ENCODE measurements at regions of chr9 and their contacts with region 1.

Region 1: GRCh38 chr9:122350638-122351355 is 20.0 kb upstream of the PTGS1 start:
- DNase-seq: peak; percentile 65
- ATAC-seq: peak; percentile 91
- H3K4me3 ChIP-seq: no peak overlapping the region
- H3K27ac ChIP-seq: no peak overlapping the region
- H3K4me1 ChIP-seq: peaks cover 6% of the 10 kb centered on the region
- H3K27me3 ChIP-seq: no peaks in the 10 kb centered on the region
- CTCF ChIP-seq: peak; percentile 99
- POLR2A ChIP-seq: 0 out of 2 replicates have a peak, but pooled peaks have one; percentile 42
- RAD21 ChIP-seq: peak; percentile 99

Region 2: GRCh38 chr9:122099271-122099869 is 251.4 kb before region 1 on chr9:
- CTCF ChIA-PET with region 1: interaction called, 19 read pairs
- POLR2A ChIA-PET with region 1: no interaction called
- dilution Hi-C with region 1: no loop called
- in situ Hi-C with region 1: loop called (anchors 10 kb)
- intact Hi-C with region 1: loop called (anchors 1 kb)
- DNase-seq: peak; percentile 74
- ATAC-seq: peak; percentile 89
- H3K4me3 ChIP-seq: no peak overlapping the region
- H3K27ac ChIP-seq: no peak overlapping the region
- H3K4me1 ChIP-seq: no peaks in the 10 kb centered on the region; the same call in 1 of the 2 replicates
- H3K27me3 ChIP-seq: peaks cover 3% of the 10 kb centered on the region
- CTCF ChIP-seq: peak; percentile 86
- POLR2A ChIP-seq: no peak
- RAD21 ChIP-seq: peak; percentile 82

Region 3: DNA sequence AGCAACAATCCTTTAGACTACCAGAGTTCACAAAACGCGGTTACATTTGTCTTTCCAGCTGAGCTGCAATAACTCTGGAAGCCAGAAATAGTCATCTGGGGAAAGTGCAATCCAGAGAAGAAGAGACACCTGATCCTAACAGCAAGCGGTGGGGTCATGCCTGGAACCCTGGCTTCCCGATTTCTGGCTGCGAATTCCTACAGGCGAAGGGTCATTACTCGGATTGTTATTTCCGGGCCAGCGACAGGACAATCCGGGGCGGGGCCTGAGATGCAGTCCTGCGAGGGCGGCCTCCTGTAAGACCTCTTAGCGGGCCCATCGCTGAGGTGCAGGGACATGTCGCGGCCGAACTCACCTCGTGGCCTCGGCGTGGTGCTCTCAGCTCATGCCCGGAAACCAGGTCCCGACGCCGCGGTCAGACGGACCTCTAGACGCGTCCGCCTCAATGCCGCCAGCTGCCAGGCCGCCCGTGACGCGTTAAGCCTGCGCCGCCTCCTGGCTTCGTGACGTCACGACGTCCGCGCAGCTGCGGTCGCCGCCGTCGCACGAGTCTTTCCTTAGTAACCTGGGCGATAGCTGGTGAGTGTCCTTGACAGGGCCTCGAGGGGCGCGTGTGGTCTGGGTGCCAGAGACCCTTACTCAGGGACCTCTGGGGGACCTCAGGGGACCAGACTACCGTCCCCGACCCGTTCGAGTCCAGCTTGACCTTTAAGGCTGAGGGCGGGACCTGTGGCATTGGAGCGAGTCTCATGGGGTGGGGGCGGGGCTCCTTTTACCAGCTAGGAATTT is 86.2 kb before region 1 on chr9 and contains the starts of genes MRRF and RBM18:
- CTCF ChIA-PET with region 1: interaction called, 6 read pairs
- POLR2A ChIA-PET with region 1: interaction called, 5 read pairs
- dilution Hi-C with region 1: no loop called
- in situ Hi-C with region 1: no loop called
- intact Hi-C with region 1: loop called (anchors 1 kb)
- DNase-seq: peak; percentile 91
- ATAC-seq: peak; percentile 92
- H3K4me3 ChIP-seq: peak within 1 kb of the TSS; percentile 72
- H3K27ac ChIP-seq: peak within 1 kb of the TSS; percentile 99
- H3K4me1 ChIP-seq: no peaks in the 10 kb centered on the region; the same call in 1 of the 2 replicates
- H3K27me3 ChIP-seq: no peaks in the 10 kb centered on the region
- CTCF ChIP-seq: 0 out of 2 replicates have a peak, but pooled peaks have one; percentile 15
- POLR2A ChIP-seq: peak; percentile 80
- RAD21 ChIP-seq: peak; percentile 8; the same call in 1 of the 2 replicates
- total RNA-seq, gene MRRF: 35.8 and 38.0 TPM in 2 replicates
- total RNA-seq, gene RBM18: 8.1 and 8.4 TPM in 2 replicates

Region 4: DNA sequence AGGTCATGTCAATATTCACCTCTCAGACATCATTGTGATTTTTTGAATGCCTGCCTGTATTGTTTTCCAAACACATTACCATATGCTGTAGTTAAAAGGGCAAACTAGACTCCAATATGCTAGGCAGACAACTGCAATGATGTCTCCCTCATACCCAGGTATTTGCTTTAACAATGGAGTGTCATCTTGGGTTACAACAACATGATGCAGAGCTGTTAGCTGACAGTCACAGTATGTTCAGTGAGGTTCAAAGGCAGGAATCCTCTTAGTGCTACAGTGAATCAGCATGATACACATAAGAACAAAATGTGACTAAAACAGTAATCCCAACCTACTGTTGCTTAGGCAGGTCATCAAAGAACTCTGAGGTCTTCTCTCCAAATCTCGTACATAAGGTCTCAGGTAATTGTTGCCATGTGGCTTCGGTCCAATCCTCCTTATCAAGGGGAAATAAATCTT is 102.9 kb after region 1 on chr9:
- CTCF ChIA-PET with region 1: interaction called, 5 read pairs
- POLR2A ChIA-PET with region 1: no interaction called
- dilution Hi-C with region 1: no loop called
- in situ Hi-C with region 1: loop called (anchors 5 kb)
- intact Hi-C with region 1: loop called (anchors 1 kb)
- DNase-seq: peak; percentile 55
- ATAC-seq: peak; percentile 28
- H3K4me3 ChIP-seq: no peak overlapping the region
- H3K27ac ChIP-seq: no peak overlapping the region
- H3K4me1 ChIP-seq: no peaks in the 10 kb centered on the region; the same call in 1 of the 2 replicates
- H3K27me3 ChIP-seq: no peaks in the 10 kb centered on the region; the same call in 1 of the 2 replicates
- CTCF ChIP-seq: no peak
- POLR2A ChIP-seq: no peak
- RAD21 ChIP-seq: no peak